ENCODE measurements at regions of chr6 and their contacts with region 1.

Region 1: GRCh38 chr6:134640975-134641429 is 308.9 kb downstream of the ALDH8A1 start:
- DNase-seq: peak; percentile 84 to 88
- ATAC-seq: peak; percentile 94
- H3K4me3 ChIP-seq: no peak overlapping the region
- H3K27ac ChIP-seq: no peak overlapping the region
- H3K4me1 ChIP-seq: peaks cover 0 to 2% of the 10 kb centered on the region in 2 donors
- H3K27me3 ChIP-seq: no peaks in the 10 kb centered on the region

Region 2: GRCh38 chr6:134822920-134823709 is 182.1 kb after region 1 on chr6:
- intact Hi-C with region 1: loop called in 1 of 2 experiments (anchors 5 kb)
- DNase-seq: no peak
- ATAC-seq: peak; percentile 80
- H3K4me3 ChIP-seq: no peak overlapping the region
- H3K27ac ChIP-seq: no peak overlapping the region
- H3K4me1 ChIP-seq: peaks cover 3 to 5% of the 10 kb centered on the region in 2 donors
- H3K27me3 ChIP-seq: no peaks in the 10 kb centered on the region

Region 3: DNA sequence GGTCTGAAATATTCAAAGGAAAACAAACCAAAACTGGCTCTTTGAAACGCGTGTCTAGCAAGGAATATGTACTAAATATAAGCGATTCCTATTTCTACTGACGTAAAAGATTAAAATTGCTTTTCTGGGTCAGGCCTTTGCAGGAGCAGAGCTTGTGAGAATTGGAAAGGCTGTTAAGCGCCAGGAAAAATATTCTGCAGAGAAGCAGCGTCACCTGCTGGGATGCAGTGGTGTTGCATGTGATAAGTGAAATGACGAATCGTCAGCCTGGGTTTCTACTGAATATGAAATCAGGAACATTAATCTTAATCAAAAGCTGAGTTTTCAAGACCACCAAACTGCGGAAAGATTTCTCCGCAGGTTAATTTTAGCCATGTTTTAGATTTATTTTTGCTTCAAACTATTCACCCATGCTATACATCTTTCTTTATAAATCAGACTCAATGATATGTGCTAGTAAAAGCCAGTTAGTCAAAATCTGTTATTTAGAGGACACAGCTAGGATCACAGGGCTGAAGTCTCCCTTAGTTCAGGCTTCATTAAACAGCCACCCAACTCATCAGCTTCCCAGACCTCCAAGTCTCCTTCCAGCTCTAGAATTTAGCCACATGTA is 241.5 kb after region 1 on chr6:
- intact Hi-C with region 1: loop called in 1 of 2 experiments (anchors 10 kb)
- DNase-seq: peak; percentile 77 to 84
- ATAC-seq: peak; percentile 88
- H3K4me3 ChIP-seq: no peak overlapping the region
- H3K27ac ChIP-seq: no peak overlapping the region
- H3K4me1 ChIP-seq: no peaks in the 10 kb centered on the region
- H3K27me3 ChIP-seq: no peaks in the 10 kb centered on the region

Measured in aorta (tissue), 5 donors.